Activated CD4-positive, alpha-beta memory T cell treated with anti-CD3 and anti-CD28 coated beads, Interleukin-2, amount 10 ng/mL, durations not matched to agents 7 days and 5 days (primary cell): ENCODE measurements at regions of chr11 and their contacts with region 1.

Region 1: DNA sequence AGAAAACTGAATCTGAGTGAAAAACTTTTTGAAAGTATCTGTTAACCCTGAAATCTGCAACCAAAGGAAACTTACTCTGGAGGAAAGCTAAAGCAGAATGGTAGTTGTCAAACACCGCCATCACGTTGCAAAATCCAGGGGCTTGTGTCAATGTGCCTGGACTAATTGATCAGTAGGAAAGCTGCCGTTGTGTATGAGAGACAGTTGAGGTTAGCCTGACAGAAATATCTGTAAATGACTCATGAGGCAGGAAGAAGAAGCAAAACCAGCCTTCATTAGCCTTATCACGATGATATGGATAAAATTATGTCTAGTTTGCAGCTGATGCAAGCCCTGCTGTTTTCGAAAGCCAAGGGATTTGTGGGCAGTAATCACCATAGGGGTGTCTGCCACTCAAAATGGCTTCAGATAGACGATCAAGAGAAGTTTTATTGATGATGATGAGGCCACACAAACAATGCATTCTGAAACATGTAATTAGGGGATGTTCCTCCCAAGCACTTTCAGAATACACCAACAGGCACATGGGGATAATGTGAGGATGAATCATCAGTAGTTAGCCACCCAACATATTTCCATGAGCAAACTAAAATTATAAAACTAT is 8.9 kb downstream of the SCGB1A1 start:
- DNase-seq: peak; percentile 48
- H3K4me3 Mint-ChIP-seq: peak overlapping the region; percentile 41
- H3K27ac Mint-ChIP-seq: peak overlapping the region; percentile 91
- H3K4me1 Mint-ChIP-seq: peaks cover 68% of the 10 kb centered on the region
- H3K27me3 Mint-ChIP-seq: peaks cover 1% of the 10 kb centered on the region

Region 2: DNA sequence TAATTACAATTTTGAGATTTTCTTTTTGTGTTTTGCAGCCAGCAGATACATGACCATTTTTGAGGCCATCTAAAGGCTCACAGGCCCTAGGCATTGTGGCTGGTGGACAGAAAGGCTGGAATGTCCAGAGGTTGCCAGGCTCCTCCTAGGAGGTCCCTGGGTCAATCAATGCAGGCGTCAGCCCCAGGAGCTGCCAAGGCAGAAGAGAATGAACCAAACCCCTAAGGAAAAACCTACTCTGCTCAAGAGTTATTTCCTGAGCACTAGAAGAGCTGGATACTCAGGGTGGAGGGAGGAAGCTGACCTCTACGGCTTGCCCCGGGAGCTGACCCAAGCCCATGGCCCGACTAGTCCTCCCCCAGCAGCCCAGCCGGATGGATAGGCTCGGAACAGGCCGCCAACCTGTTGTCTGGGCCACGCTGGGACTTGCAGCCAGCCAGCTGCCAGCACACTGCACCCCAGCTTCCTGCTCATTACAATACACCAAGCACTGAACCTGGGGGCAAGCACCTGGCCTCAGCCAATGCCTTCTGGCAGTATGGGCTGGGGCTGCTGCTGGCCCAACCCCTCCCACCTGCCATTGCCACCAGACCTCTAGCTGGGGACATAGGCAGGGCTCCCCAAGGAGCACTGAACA is 14.6 kb before region 1 on chr11:
- CTCF ChIA-PET with region 1: interaction called, 13 read pairs
- POLR2A ChIA-PET with region 1: no interaction called
- DNase-seq: no peak
- H3K4me3 Mint-ChIP-seq: no peak overlapping the region
- H3K27ac Mint-ChIP-seq: no peak overlapping the region
- H3K4me1 Mint-ChIP-seq: no peaks in the 10 kb centered on the region
- H3K27me3 Mint-ChIP-seq: no peaks in the 10 kb centered on the region

Region 3: DNA sequence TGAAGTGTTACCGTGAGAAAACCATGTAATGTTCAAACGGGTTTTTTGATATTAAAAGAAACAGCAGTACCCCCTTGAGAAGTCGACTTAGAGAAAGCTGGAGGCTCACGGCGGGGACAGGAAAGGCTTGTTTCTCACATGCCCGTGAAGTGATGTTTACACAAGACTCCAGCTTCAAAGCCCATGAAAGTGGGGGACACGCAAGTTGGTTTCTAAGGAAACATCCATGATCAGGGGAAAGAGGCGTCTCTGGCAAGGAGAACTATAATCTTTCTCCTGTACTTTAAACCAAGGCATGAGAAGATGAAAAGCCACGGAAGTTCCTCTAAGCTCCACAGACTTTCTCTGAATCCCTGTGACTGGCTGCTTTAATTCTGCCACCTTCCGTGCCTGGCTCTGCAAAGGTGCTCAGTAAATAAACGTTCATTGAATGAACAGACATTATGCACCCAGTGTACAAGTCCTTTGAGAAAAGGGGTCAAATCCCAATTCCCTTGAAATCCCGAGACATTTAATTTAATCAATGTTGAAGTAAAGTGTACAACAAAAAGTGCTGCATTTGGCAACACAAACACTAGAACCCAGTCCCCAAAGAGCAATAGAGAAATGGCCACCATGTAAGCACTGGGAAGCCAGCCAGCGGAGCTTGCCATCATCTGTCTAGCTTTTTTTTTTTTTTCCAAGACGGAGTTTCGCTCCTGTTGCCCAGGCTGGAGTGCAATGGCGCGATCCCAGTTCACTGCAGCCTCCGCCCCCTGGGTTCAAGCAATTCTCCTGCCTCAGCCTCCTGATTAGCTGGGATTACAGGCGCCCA is 60.2 kb after region 1 on chr11:
- CTCF ChIA-PET with region 1: interaction called, 13 read pairs
- POLR2A ChIA-PET with region 1: no interaction called
- DNase-seq: no peak
- H3K4me3 Mint-ChIP-seq: no peak overlapping the region
- H3K27ac Mint-ChIP-seq: no peak overlapping the region
- H3K4me1 Mint-ChIP-seq: no peaks in the 10 kb centered on the region
- H3K27me3 Mint-ChIP-seq: peaks cover 2% of the 10 kb centered on the region

Region 4: GRCh38 chr11:62542750-62543567 is 115.2 kb after region 1 on chr11:
- CTCF ChIA-PET with region 1: interaction called, 256 read pairs
- POLR2A ChIA-PET with region 1: interaction called, 99 read pairs
- DNase-seq: peak; percentile 80
- H3K4me3 Mint-ChIP-seq: peak overlapping the region; percentile 100
- H3K27ac Mint-ChIP-seq: peak overlapping the region; percentile 93
- H3K4me1 Mint-ChIP-seq: peaks cover 76% of the 10 kb centered on the region
- H3K27me3 Mint-ChIP-seq: peaks cover 4% of the 10 kb centered on the region

Region 5: GRCh38 chr11:62573592-62574362 is 146.0 kb after region 1 on chr11 and contains the start of gene EEF1G:
- CTCF ChIA-PET with region 1: interaction called, 13 read pairs
- POLR2A ChIA-PET with region 1: interaction called, 5 read pairs
- DNase-seq: peak; percentile 99
- H3K4me3 Mint-ChIP-seq: peak within 1 kb of the TSS; percentile 94
- H3K27ac Mint-ChIP-seq: peak within 1 kb of the TSS; percentile 91
- H3K4me1 Mint-ChIP-seq: peaks cover 58% of the 10 kb centered on the region
- H3K27me3 Mint-ChIP-seq: no peaks in the 10 kb centered on the region
- total RNA-seq, gene EEF1G: 991 to 999 TPM